ENCODE measurements at regions of chr16 and their contacts with region 1.

Region 1: GRCh38 chr16:4402439-4403132 is 13.8 kb downstream of the CORO7 start:
- DNase-seq: peak in 34 of 35 experiments; percentile 27 to 74 (median 54)
- ATAC-seq: peak; percentile 39 to 79 (median 72)
- H3K4me3 ChIP-seq: no peak overlapping the region
- H3K4me3 Mint-ChIP-seq: no peak overlapping the region
- H3K27ac ChIP-seq: peak overlapping the region; percentile 4
- H3K27ac Mint-ChIP-seq: no peak overlapping the region
- H3K4me1 ChIP-seq: peaks cover 0 to 22% of the 10 kb centered on the region in 2 experiments
- H3K4me1 Mint-ChIP-seq: peaks cover 9 to 28% (median 23%) of the 10 kb centered on the region in 3 donors
- H3K27me3 ChIP-seq: no peaks in the 10 kb centered on the region
- H3K27me3 Mint-ChIP-seq: no peaks in the 10 kb centered on the region

Region 2: DNA sequence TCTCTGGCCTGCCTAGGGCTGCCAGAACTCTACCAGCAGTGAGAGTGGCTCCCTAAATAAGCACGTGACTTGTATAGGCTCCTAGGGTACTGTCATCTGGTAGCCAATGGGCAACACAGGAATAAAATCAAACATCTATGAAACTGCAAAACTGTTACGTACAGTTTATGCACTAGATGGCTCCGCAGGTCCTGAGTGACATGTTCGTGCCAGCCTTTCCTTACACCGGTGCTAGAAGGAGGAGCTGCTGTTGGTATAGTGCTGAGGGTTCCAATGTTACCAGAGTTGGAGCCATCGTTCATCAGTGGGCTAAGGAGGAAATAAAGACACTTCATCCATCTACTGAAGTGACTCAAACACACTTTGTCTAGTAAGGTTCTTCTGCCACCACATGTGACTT is 622.0 kb before region 1 on chr16:
- CTCF ChIA-PET with region 1: no interaction called
- POLR2A ChIA-PET with region 1: interaction called in 1 of 2 experiments, 13 read pairs
- DNase-seq: peak in 6 of 35 experiments; percentile 4 to 36 (median 10)
- ATAC-seq: peak; percentile 24 to 75 (median 38)
- H3K4me3 ChIP-seq: no peak overlapping the region
- H3K4me3 Mint-ChIP-seq: no peak overlapping the region
- H3K27ac ChIP-seq: no peak overlapping the region
- H3K27ac Mint-ChIP-seq: no peak overlapping the region
- H3K4me1 ChIP-seq: no peaks in the 10 kb centered on the region
- H3K4me1 Mint-ChIP-seq: peaks cover 16 to 28% (median 23%) of the 10 kb centered on the region in 3 donors
- H3K27me3 ChIP-seq: no peaks in the 10 kb centered on the region
- H3K27me3 Mint-ChIP-seq: no peaks in the 10 kb centered on the region

Region 3: GRCh38 chr16:4123616-4124265 is 278.8 kb before region 1 on chr16:
- CTCF ChIA-PET with region 1: no interaction called
- POLR2A ChIA-PET with region 1: no interaction called
- DNase-seq: no peak
- ATAC-seq: no peak
- H3K4me3 ChIP-seq: no peak overlapping the region
- H3K4me3 Mint-ChIP-seq: no peak overlapping the region
- H3K27ac ChIP-seq: no peak overlapping the region
- H3K27ac Mint-ChIP-seq: no peak overlapping the region
- H3K4me1 ChIP-seq: no peaks in the 10 kb centered on the region
- H3K4me1 Mint-ChIP-seq: no peaks in the 10 kb centered on the region
- H3K27me3 ChIP-seq: peaks cover 0 to 21% of the 10 kb centered on the region in 2 experiments
- H3K27me3 Mint-ChIP-seq: peaks cover 3 to 9% of the 10 kb centered on the region in 2 donors

Region 4: GRCh38 chr16:4183237-4184036 is 219.1 kb before region 1 on chr16:
- CTCF ChIA-PET with region 1: no interaction called
- POLR2A ChIA-PET with region 1: no interaction called
- DNase-seq: peak; percentile 28 to 88 (median 56)
- ATAC-seq: peak; percentile 86 to 94 (median 90)
- H3K4me3 ChIP-seq: peak overlapping the region; percentile 57 to 86
- H3K4me3 Mint-ChIP-seq: peak overlapping the region; percentile 72 to 81 (median 75)
- H3K27ac ChIP-seq: peak overlapping the region; percentile 5
- H3K27ac Mint-ChIP-seq: no peak overlapping the region
- H3K4me1 ChIP-seq: peaks cover 0 to 17% of the 10 kb centered on the region in 2 experiments
- H3K4me1 Mint-ChIP-seq: peaks cover 6 to 11% (median 6%) of the 10 kb centered on the region in 3 donors
- H3K27me3 ChIP-seq: peaks cover 0 to 6% of the 10 kb centered on the region in 2 experiments
- H3K27me3 Mint-ChIP-seq: peaks cover 0 to 2% of the 10 kb centered on the region in 2 donors

Region 5: GRCh38 chr16:4264546-4264945 is 138.0 kb before region 1 on chr16:
- CTCF ChIA-PET with region 1: no interaction called
- POLR2A ChIA-PET with region 1: interaction called in 1 of 2 experiments, 10 read pairs
- DNase-seq: no peak
- ATAC-seq: no peak
- H3K4me3 ChIP-seq: no peak overlapping the region
- H3K4me3 Mint-ChIP-seq: no peak overlapping the region
- H3K27ac ChIP-seq: no peak overlapping the region
- H3K27ac Mint-ChIP-seq: no peak overlapping the region
- H3K4me1 ChIP-seq: peaks cover 0 to 4% of the 10 kb centered on the region in 2 experiments
- H3K4me1 Mint-ChIP-seq: peaks cover 14 to 18% (median 14%) of the 10 kb centered on the region in 3 donors
- H3K27me3 ChIP-seq: no peaks in the 10 kb centered on the region
- H3K27me3 Mint-ChIP-seq: no peaks in the 10 kb centered on the region

Region 6: GRCh38 chr16:4416200-4417032 is 13.8 kb after region 1 on chr16 and contains the start of gene CORO7:
- CTCF ChIA-PET with region 1: interaction called, 3 to 10 read pairs
- POLR2A ChIA-PET with region 1: interaction called, 7 to 11 read pairs
- DNase-seq: peak; percentile 97 to 100 (median 99)
- ATAC-seq: peak; percentile 78 to 91 (median 79)
- H3K4me3 ChIP-seq: peak within 1 kb of the TSS; percentile 66 to 68
- H3K4me3 Mint-ChIP-seq: peak within 1 kb of the TSS; percentile 91 to 93 (median 92)
- H3K27ac ChIP-seq: peak within 1 kb of the TSS; percentile 95
- H3K27ac Mint-ChIP-seq: peak within 1 kb of the TSS; percentile 94
- H3K4me1 ChIP-seq: peaks cover 6 to 48% of the 10 kb centered on the region in 2 experiments
- H3K4me1 Mint-ChIP-seq: peaks cover 31 to 39% (median 32%) of the 10 kb centered on the region in 3 donors
- H3K27me3 ChIP-seq: no peaks in the 10 kb centered on the region
- H3K27me3 Mint-ChIP-seq: no peaks in the 10 kb centered on the region
- total RNA-seq, gene CORO7: 213 to 675 (median 230) TPM

Region 7: DNA sequence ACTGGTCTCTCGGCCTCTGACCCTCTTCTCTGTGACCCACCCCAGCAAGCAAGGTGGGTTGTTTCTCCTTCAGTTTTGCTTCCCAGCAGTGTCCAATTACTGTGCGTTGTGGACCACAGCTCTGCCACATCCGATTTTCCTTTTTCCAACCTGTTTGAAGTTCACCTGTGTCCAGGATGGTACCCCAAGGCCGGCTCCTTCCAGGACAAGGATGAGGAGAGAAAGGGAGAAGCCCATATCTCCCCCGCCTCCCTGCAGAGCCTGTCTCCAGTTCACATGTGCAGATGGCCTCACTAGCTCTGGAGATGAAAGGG is 58.3 kb after region 1 on chr16:
- CTCF ChIA-PET with region 1: no interaction called
- POLR2A ChIA-PET with region 1: interaction called, 3 to 10 read pairs
- DNase-seq: no peak
- ATAC-seq: no peak
- H3K4me3 ChIP-seq: no peak overlapping the region
- H3K4me3 Mint-ChIP-seq: no peak overlapping the region
- H3K27ac ChIP-seq: no peak overlapping the region
- H3K27ac Mint-ChIP-seq: peak overlapping the region; percentile 34 to 72
- H3K4me1 ChIP-seq: peaks cover 0 to 40% of the 10 kb centered on the region in 2 experiments
- H3K4me1 Mint-ChIP-seq: peaks cover 19 to 30% (median 25%) of the 10 kb centered on the region in 3 donors
- H3K27me3 ChIP-seq: no peaks in the 10 kb centered on the region
- H3K27me3 Mint-ChIP-seq: no peaks in the 10 kb centered on the region

Region 8: DNA sequence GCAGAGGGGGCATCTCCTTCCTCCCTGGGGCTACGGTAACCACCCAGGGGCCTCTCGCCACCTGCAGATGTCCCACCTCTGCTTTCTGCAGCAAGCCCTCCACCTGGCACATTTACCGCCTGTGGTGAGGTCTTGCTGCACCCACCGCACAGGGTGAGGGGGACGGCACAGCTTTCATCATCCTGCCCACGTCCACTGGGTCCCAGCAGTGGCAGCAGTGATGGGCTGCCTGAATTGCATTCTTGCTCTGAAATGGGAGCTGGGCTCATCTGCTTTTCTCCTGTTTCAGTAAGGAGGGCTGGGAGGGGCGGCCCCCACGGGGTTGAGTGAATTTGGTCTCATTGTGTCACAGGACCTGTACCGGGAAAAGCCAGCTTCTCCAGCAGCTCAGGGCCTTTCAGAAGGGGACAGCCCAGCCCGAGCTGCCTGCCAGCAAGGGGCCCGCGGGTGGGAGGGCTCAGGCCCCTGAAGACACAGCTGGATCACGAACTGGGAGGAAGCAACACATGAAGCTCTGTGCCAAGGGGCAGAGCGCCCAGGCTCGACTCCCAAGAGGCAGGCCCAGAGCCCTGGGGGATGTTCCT is 344.5 kb after region 1 on chr16:
- CTCF ChIA-PET with region 1: no interaction called
- POLR2A ChIA-PET with region 1: no interaction called
- DNase-seq: no peak
- ATAC-seq: peak in 3 of 4 experiments; percentile 16 to 32 (median 18)
- H3K4me3 ChIP-seq: no peak overlapping the region
- H3K4me3 Mint-ChIP-seq: peak overlapping the region in 1 of 3 donors; percentile 79
- H3K27ac ChIP-seq: peak overlapping the region; percentile 41
- H3K27ac Mint-ChIP-seq: peak overlapping the region in 1 of 2 donors; percentile 34
- H3K4me1 ChIP-seq: peaks cover 0 to 33% of the 10 kb centered on the region in 2 experiments
- H3K4me1 Mint-ChIP-seq: peaks cover 21 to 29% (median 26%) of the 10 kb centered on the region in 3 donors
- H3K27me3 ChIP-seq: peaks cover 0 to 6% of the 10 kb centered on the region in 2 experiments
- H3K27me3 Mint-ChIP-seq: no peaks in the 10 kb centered on the region